HEK293 (cell line): ENCODE measurements at regions of chr2 and their contacts with region 1.

Region 1: GRCh38 chr2:8872821-8873432 is 35.5 kb upstream of the KIDINS220 start:
- H3K4me3 ChIP-seq: no peak overlapping the region
- H3K27ac ChIP-seq: no peak overlapping the region
- H3K4me1 ChIP-seq: no peaks in the 10 kb centered on the region
- CTCF ChIP-seq: peak; percentile 15; the same call in 1 of the 2 replicates

Region 2: GRCh38 chr2:8819194-8819593 is 53.7 kb before region 1 on chr2:
- CTCF ChIA-PET with region 1: no interaction called
- POLR2A ChIA-PET with region 1: no interaction called
- H3K4me3 ChIP-seq: no peak overlapping the region
- H3K27ac ChIP-seq: no peak overlapping the region
- H3K4me1 ChIP-seq: no peaks in the 10 kb centered on the region
- CTCF ChIP-seq: no peak

Region 3: DNA sequence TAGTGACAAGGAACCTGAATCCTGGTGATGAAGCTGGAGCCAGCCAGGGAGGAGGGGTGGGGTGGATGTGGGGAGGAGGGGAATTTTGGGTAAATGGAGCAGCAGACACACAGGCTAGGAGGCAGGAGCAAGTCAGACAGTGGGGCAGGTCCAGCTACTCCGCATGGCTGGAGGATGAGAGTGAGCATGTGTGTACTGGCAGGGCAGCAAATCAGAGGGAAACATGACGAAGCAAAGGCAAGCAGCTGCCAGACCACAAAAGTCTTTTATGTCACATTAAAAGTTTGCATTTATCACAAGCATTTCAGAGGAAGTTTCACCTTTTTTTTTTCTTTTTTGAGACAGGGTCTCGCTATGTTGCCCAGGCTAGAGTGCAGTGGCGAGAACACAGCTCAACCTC is 23.6 kb before region 1 on chr2:
- CTCF ChIA-PET with region 1: no interaction called
- POLR2A ChIA-PET with region 1: no interaction called
- H3K4me3 ChIP-seq: no peak overlapping the region
- H3K27ac ChIP-seq: no peak overlapping the region
- H3K4me1 ChIP-seq: peaks cover 2% of the 10 kb centered on the region; the same call in 1 of the 2 replicates
- CTCF ChIP-seq: no peak

Region 4: GRCh38 chr2:8862230-8862629 is 10.7 kb before region 1 on chr2:
- CTCF ChIA-PET with region 1: interaction called, 18 read pairs
- POLR2A ChIA-PET with region 1: interaction called, 3 read pairs
- H3K4me3 ChIP-seq: no peak overlapping the region
- H3K27ac ChIP-seq: no peak overlapping the region
- H3K4me1 ChIP-seq: 0 out of 2 replicates have a peak, but pooled peaks cover 2% of the 10 kb centered on the region
- CTCF ChIP-seq: no peak

Region 5: GRCh38 chr2:8889978-8890377 is 17.1 kb after region 1 on chr2:
- CTCF ChIA-PET with region 1: interaction called, 18 read pairs
- POLR2A ChIA-PET with region 1: no interaction called
- H3K4me3 ChIP-seq: no peak overlapping the region
- H3K27ac ChIP-seq: no peak overlapping the region
- H3K4me1 ChIP-seq: 0 out of 2 replicates have a peak, but pooled peaks cover 3% of the 10 kb centered on the region
- CTCF ChIP-seq: no peak

Region 6: GRCh38 chr2:9050122-9050809 is 177.3 kb after region 1 on chr2:
- CTCF ChIA-PET with region 1: no interaction called
- POLR2A ChIA-PET with region 1: no interaction called
- H3K4me3 ChIP-seq: no peak overlapping the region
- H3K27ac ChIP-seq: no peak overlapping the region
- H3K4me1 ChIP-seq: no peaks in the 10 kb centered on the region
- CTCF ChIP-seq: no peak